Activated CD8-positive, alpha-beta T cell treated with anti-CD3 and anti-CD28 coated beads for 36 hours (primary cell): ENCODE measurements at regions of chr10 and their contacts with region 1.

Region 1: DNA sequence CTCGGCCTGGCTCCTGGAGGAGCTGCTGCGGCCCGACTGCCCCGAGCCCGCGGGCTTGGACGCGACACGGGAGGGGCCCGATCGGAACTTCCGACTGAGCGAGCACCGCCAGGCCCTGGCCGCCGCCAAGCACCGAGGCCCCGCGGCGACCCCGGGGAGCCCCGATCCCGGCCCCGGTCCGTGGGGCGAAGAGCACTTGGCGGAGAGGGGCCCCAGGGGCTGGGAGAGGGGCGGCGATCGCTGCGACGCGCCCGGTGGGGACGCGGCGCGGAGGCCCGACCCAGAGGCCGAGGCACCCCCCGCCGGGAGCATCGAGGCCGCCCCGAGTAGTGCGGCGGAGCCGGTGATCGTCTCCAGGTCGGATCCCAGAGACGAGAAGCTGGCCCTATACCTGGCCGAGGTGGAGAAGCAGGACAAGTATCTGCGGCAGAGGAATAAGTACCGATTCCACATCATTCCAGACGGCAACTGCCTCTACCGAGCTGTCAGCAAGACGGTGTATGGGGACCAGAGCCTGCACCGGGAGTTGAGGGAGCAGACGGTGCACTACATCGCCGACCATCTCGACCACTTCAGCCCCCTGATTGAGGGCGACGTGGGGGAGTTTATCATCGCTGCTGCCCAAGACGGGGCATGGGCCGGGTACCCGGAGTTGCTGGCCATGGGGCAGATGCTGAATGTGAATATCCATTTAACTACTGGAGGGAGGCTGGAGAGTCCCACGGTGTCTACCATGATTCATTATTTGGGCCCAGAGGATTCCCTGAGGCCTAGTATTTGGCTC is 1.3 kb downstream of the OTUD1 start:
- DNase-seq: peak; percentile 26
- ATAC-seq: peak; percentile 17
- H3K4me3 Mint-ChIP-seq: peak overlapping the region; percentile 92
- H3K27ac Mint-ChIP-seq: peak overlapping the region; percentile 84
- H3K4me1 Mint-ChIP-seq: peaks cover 32% of the 10 kb centered on the region
- H3K27me3 Mint-ChIP-seq: no peaks in the 10 kb centered on the region
- CTCF ChIP-seq: no peak

Region 2: DNA sequence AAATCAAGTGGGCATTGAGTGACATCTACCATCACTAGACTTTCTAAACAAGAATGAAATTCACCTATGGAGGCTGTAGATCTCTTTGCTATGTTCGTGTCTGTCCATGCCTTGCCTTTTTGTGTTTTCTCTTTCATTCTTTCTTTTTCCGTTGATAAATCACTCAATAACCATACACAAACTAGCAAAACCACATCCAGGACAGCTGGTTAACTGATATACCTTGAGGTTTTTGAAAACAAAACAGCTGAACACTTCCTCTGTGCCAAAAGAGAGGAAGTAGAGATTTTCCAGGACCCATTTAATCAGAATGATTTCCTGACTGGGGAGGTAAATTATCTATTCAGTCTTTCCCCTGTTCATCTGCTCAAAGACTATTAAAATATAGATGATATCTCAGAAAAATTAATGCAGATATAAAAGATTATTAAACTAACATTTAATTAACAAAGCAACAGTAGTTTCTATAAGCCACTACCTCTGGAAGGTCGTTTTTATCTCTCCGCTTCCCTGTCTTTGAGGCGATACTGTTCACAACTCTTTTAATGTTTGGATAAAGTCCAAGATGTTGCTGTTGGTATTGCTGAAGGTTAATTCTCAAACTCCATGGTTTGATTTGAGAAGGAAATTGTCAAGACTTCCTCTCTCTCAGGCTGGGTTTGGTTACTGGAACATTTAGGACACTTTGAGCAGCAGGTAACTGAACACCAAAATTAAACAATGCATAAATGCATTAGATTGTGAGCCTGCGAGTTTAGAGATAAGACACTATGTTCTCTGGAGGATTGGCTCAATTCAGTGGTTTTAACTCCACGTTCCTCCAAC is 71.1 kb before region 1 on chr10:
- CTCF ChIA-PET with region 1: no interaction called
- POLR2A ChIA-PET with region 1: no interaction called
- intact Hi-C with region 1: loop called (anchors 10 kb)
- DNase-seq: peak; percentile 20
- ATAC-seq: peak; percentile 32
- H3K4me3 Mint-ChIP-seq: peak overlapping the region; percentile 45
- H3K27ac Mint-ChIP-seq: peak overlapping the region; percentile 71
- H3K4me1 Mint-ChIP-seq: peaks cover 51% of the 10 kb centered on the region
- H3K27me3 Mint-ChIP-seq: no peaks in the 10 kb centered on the region
- CTCF ChIP-seq: no peak

Region 3: DNA sequence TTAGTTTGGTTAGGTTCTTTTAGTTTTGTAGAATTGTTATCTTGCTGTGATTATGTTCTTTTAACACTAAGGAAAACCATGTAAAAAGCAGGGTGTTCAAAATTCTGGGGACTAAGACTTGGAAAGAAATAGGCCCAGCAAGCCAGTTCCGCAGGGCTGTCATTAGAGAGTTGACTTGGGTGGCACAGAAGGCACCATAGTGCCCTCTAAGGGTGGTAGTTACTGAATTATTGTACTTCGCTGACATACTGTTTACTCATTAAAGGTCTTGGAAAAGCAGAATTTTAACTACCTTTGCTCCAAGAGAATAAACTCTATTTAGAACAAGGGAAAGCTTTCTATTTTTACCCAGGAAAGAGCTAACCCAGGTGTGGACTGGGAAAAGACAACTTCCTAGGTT is 85.3 kb after region 1 on chr10:
- CTCF ChIA-PET with region 1: interaction called, 4 read pairs
- POLR2A ChIA-PET with region 1: no interaction called
- intact Hi-C with region 1: loop called (anchors 10 kb)
- DNase-seq: no peak
- ATAC-seq: peak; percentile 51
- H3K4me3 Mint-ChIP-seq: no peak overlapping the region
- H3K27ac Mint-ChIP-seq: no peak overlapping the region
- H3K4me1 Mint-ChIP-seq: peaks cover 5% of the 10 kb centered on the region
- H3K27me3 Mint-ChIP-seq: peaks cover 3% of the 10 kb centered on the region
- CTCF ChIP-seq: peak; percentile 32